ENCODE measurements at regions of chr3 and their contacts with region 1.

Region 1: GRCh38 chr3:176351408-176351807 is 845.9 kb downstream of the TBL1XR1 start:
- DNase-seq: no peak
- ATAC-seq: peak; percentile 72
- H3K4me3 ChIP-seq: no peak overlapping the region
- H3K27ac ChIP-seq: peak overlapping the region in 1 of 2 donors; percentile 12
- H3K4me1 ChIP-seq: peaks cover 0 to 1% of the 10 kb centered on the region in 2 donors
- H3K27me3 ChIP-seq: no peaks in the 10 kb centered on the region

Region 2: DNA sequence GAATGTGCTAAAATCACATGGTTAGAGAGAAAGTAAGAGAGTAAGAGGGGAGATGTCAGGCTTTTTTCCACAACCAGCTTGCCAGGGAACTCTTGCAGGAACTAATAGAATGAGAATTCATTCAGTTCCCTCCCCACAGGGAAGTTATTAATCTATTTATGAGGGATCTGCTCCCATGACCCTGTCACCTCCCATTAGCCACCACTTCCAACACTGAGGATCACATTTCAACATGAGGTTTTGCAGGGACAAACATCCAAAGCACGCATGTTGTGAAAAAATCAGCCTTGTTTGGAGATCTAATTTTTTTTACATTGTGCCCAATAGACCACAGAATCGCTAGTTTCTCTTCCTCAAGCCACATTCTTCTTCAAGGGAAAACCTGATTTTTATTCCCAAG is 58.1 kb before region 1 on chr3:
- intact Hi-C with region 1: loop called in 1 of 2 experiments (anchors 5 kb)
- DNase-seq: no peak
- ATAC-seq: no peak
- H3K4me3 ChIP-seq: no peak overlapping the region
- H3K27ac ChIP-seq: peak overlapping the region in 1 of 2 donors; percentile 0
- H3K4me1 ChIP-seq: peaks cover 4 to 6% of the 10 kb centered on the region in 2 donors
- H3K27me3 ChIP-seq: no peaks in the 10 kb centered on the region

Region 3: GRCh38 chr3:176692966-176693785 is 341.8 kb after region 1 on chr3:
- intact Hi-C with region 1: no loop called
- DNase-seq: peak in 1 of 2 donors; percentile 12
- ATAC-seq: no peak
- H3K4me3 ChIP-seq: no peak overlapping the region
- H3K27ac ChIP-seq: no peak overlapping the region
- H3K4me1 ChIP-seq: no peaks in the 10 kb centered on the region
- H3K27me3 ChIP-seq: peaks cover 0 to 3% of the 10 kb centered on the region in 2 donors